Activated CD8-positive, alpha-beta T cell treated with anti-CD3 and anti-CD28 coated beads, Interleukin-2, amount 10 ng/mL, durations not matched to agents 7 days and 5 days (primary cell): ENCODE measurements at regions of chr11 and their contacts with region 1.

Region 1: DNA sequence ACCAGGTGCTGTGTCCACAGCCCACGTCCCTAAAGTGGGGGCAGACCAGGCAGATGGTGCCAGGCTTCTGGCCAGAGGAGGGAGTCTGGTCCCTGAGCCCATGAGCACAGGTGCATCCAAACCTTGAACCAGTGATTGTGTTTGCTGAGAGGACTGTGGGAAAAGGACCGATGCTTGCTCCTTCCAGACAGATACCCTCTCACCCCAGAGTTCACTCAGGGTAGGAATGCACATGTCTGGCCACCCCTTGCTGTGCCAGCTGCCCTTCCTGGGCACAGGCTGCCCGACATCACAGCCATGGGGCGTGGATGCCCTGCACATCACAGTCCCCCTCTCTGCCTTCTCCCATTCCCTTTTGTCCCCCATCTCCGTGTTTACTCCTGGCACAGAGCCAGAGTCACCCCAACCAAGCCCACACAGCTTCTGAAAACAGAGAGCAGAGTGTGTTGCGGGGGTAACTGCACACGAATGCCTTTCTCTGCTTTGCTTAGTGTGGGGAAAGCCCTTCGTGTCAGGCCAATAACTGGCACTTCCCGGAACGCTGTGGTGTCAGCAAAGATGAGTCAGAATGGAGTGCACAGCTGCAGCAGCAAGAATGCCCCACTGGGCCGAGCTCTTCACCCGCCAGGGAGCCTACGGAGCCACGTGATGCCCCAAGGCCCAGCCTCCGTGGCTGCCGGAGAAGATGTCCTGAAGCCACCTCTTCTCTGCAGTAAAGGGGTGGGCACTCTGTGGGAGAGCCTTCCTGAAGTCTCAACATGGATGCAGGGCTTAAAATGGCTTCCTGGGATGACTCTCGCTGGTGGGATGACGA is 7.6 kb downstream of the CARS1 start:
- DNase-seq: peak; percentile 62
- ATAC-seq: peak; percentile 69
- H3K4me3 Mint-ChIP-seq: no peak overlapping the region
- H3K27ac Mint-ChIP-seq: peak overlapping the region; percentile 69
- H3K4me1 Mint-ChIP-seq: peaks cover 41% of the 10 kb centered on the region
- H3K27me3 Mint-ChIP-seq: no peaks in the 10 kb centered on the region

Region 2: GRCh38 chr11:3014057-3014938 is 35.3 kb before region 1 on chr11:
- CTCF ChIA-PET with region 1: interaction called, 12 read pairs
- POLR2A ChIA-PET with region 1: no interaction called
- DNase-seq: peak; percentile 94
- ATAC-seq: peak; percentile 84
- H3K4me3 Mint-ChIP-seq: peak overlapping the region; percentile 56
- H3K27ac Mint-ChIP-seq: peak overlapping the region; percentile 95
- H3K4me1 Mint-ChIP-seq: peaks cover 95% of the 10 kb centered on the region
- H3K27me3 Mint-ChIP-seq: no peaks in the 10 kb centered on the region

Region 3: GRCh38 chr11:3037040-3037944 is 12.3 kb before region 1 on chr11:
- CTCF ChIA-PET with region 1: interaction called, 25 read pairs
- POLR2A ChIA-PET with region 1: no interaction called
- DNase-seq: peak; percentile 58
- ATAC-seq: peak; percentile 62
- H3K4me3 Mint-ChIP-seq: no peak overlapping the region
- H3K27ac Mint-ChIP-seq: peak overlapping the region; percentile 69
- H3K4me1 Mint-ChIP-seq: peaks cover 31% of the 10 kb centered on the region
- H3K27me3 Mint-ChIP-seq: no peaks in the 10 kb centered on the region